ENCODE measurements at regions of chr6 and their contacts with region 1.

Region 1: DNA sequence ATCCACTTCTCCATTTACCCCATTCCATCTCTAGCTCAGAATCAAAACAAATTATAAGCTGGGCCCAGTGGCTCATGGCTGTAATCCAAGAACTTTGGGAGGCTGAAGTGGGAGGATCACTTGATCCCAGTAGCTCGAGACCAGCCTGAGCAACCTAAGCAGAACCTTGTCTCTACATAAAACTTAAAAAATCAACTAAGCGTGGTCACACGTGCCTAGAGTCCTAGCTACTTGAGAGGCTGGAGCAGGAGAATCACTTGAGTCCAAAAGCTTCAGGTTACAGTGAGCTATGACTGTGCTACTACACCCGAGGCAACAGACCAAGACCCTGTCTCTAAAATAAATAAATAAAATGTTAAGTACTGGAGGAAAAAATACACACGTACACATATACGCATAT is 74.7 kb upstream of the RUNX2 start:
- DNase-seq: no peak
- ATAC-seq: no peak
- H3K4me3 ChIP-seq: no peak overlapping the region
- H3K4me3 Mint-ChIP-seq: no peak overlapping the region
- H3K27ac ChIP-seq: no peak overlapping the region
- H3K27ac Mint-ChIP-seq: no peak overlapping the region
- H3K4me1 ChIP-seq: no peaks in the 10 kb centered on the region
- H3K4me1 Mint-ChIP-seq: no peaks in the 10 kb centered on the region
- H3K27me3 ChIP-seq: no peaks in the 10 kb centered on the region
- H3K27me3 Mint-ChIP-seq: no peaks in the 10 kb centered on the region

Region 2: GRCh38 chr6:44542401-44543116 is 710.9 kb before region 1 on chr6:
- CTCF ChIA-PET with region 1: no interaction called
- POLR2A ChIA-PET with region 1: no interaction called
- DNase-seq: no peak
- ATAC-seq: no peak
- H3K4me3 ChIP-seq: no peak overlapping the region
- H3K4me3 Mint-ChIP-seq: no peak overlapping the region
- H3K27ac ChIP-seq: no peak overlapping the region
- H3K27ac Mint-ChIP-seq: no peak overlapping the region
- H3K4me1 ChIP-seq: no peaks in the 10 kb centered on the region
- H3K4me1 Mint-ChIP-seq: no peaks in the 10 kb centered on the region
- H3K27me3 ChIP-seq: no peaks in the 10 kb centered on the region
- H3K27me3 Mint-ChIP-seq: peaks cover 7 to 8% of the 10 kb centered on the region in 2 donors

Region 3: DNA sequence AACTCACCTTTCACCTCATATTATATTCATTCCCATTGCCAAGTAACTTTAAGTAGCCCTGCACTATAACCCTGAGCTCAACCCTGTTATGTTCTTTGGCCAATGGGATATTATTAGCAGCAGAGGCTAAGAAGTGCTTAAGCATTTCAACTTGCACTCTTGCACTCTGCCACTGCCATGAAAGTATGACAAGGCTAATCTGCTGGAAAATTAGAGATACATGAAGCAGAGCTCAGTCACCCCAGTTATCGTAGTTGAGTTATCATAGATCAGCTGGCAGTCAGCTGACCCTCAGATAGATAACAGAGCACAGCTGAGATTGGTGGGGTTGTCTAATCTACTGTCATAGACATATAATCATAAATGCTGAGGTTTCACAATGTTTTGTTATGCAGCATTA is 134.7 kb before region 1 on chr6:
- CTCF ChIA-PET with region 1: no interaction called
- POLR2A ChIA-PET with region 1: no interaction called
- DNase-seq: no peak
- ATAC-seq: no peak
- H3K4me3 ChIP-seq: no peak overlapping the region
- H3K4me3 Mint-ChIP-seq: no peak overlapping the region
- H3K27ac ChIP-seq: no peak overlapping the region
- H3K27ac Mint-ChIP-seq: no peak overlapping the region
- H3K4me1 ChIP-seq: peaks cover 0 to 4% of the 10 kb centered on the region in 2 experiments
- H3K4me1 Mint-ChIP-seq: peaks cover 16 to 18% (median 17%) of the 10 kb centered on the region in 3 donors
- H3K27me3 ChIP-seq: no peaks in the 10 kb centered on the region
- H3K27me3 Mint-ChIP-seq: no peaks in the 10 kb centered on the region

Region 4: GRCh38 chr6:45187836-45188235 is 65.6 kb before region 1 on chr6:
- CTCF ChIA-PET with region 1: no interaction called
- POLR2A ChIA-PET with region 1: interaction called in 1 of 2 experiments, 10 read pairs
- DNase-seq: no peak
- ATAC-seq: no peak
- H3K4me3 ChIP-seq: no peak overlapping the region
- H3K4me3 Mint-ChIP-seq: no peak overlapping the region
- H3K27ac ChIP-seq: no peak overlapping the region
- H3K27ac Mint-ChIP-seq: no peak overlapping the region
- H3K4me1 ChIP-seq: peaks cover 4 to 10% of the 10 kb centered on the region in 2 experiments
- H3K4me1 Mint-ChIP-seq: peaks cover 27 to 29% (median 27%) of the 10 kb centered on the region in 3 donors
- H3K27me3 ChIP-seq: no peaks in the 10 kb centered on the region
- H3K27me3 Mint-ChIP-seq: no peaks in the 10 kb centered on the region

Region 5: GRCh38 chr6:45222380-45222779 is 31.1 kb before region 1 on chr6:
- CTCF ChIA-PET with region 1: no interaction called
- POLR2A ChIA-PET with region 1: no interaction called
- DNase-seq: no peak
- ATAC-seq: no peak
- H3K4me3 ChIP-seq: no peak overlapping the region
- H3K4me3 Mint-ChIP-seq: no peak overlapping the region
- H3K27ac ChIP-seq: no peak overlapping the region
- H3K27ac Mint-ChIP-seq: no peak overlapping the region
- H3K4me1 ChIP-seq: no peaks in the 10 kb centered on the region
- H3K4me1 Mint-ChIP-seq: peaks cover 0 to 7% (median 3%) of the 10 kb centered on the region in 3 donors
- H3K27me3 ChIP-seq: no peaks in the 10 kb centered on the region
- H3K27me3 Mint-ChIP-seq: no peaks in the 10 kb centered on the region

Region 6: GRCh38 chr6:45371924-45372573 is 118.6 kb after region 1 on chr6:
- CTCF ChIA-PET with region 1: no interaction called
- POLR2A ChIA-PET with region 1: no interaction called
- DNase-seq: no peak
- ATAC-seq: no peak
- H3K4me3 ChIP-seq: no peak overlapping the region
- H3K4me3 Mint-ChIP-seq: no peak overlapping the region
- H3K27ac ChIP-seq: no peak overlapping the region
- H3K27ac Mint-ChIP-seq: no peak overlapping the region
- H3K4me1 ChIP-seq: peaks cover 0 to 2% of the 10 kb centered on the region in 2 experiments
- H3K4me1 Mint-ChIP-seq: peaks cover 10 to 30% (median 23%) of the 10 kb centered on the region in 3 donors
- H3K27me3 ChIP-seq: no peaks in the 10 kb centered on the region
- H3K27me3 Mint-ChIP-seq: no peaks in the 10 kb centered on the region